Activated CD8-positive, alpha-beta T cell treated with anti-CD3 and anti-CD28 coated beads for 36 hours (primary cell): ENCODE measurements at regions of chr1 and their contacts with region 1.

Region 1: GRCh38 chr1:108125312-108126138 is 74.6 kb downstream of the SLC25A24 start:
- DNase-seq: peak; percentile 74
- ATAC-seq: peak; percentile 99
- H3K4me3 Mint-ChIP-seq: no peak overlapping the region
- H3K27ac Mint-ChIP-seq: no peak overlapping the region
- H3K4me1 Mint-ChIP-seq: peaks cover 3% of the 10 kb centered on the region
- H3K27me3 Mint-ChIP-seq: no peaks in the 10 kb centered on the region
- CTCF ChIP-seq: peak; percentile 89

Region 2: GRCh38 chr1:107789817-107790524 is 335.6 kb before region 1 on chr1:
- CTCF ChIA-PET with region 1: interaction called, 350 read pairs
- POLR2A ChIA-PET with region 1: no interaction called
- intact Hi-C with region 1: no loop called
- DNase-seq: no peak
- ATAC-seq: no peak
- H3K4me3 Mint-ChIP-seq: no peak overlapping the region
- H3K27ac Mint-ChIP-seq: no peak overlapping the region
- H3K4me1 Mint-ChIP-seq: peaks cover 74% of the 10 kb centered on the region
- H3K27me3 Mint-ChIP-seq: no peaks in the 10 kb centered on the region
- CTCF ChIP-seq: no peak

Region 3: GRCh38 chr1:107795994-107796393 is 329.5 kb before region 1 on chr1:
- CTCF ChIA-PET with region 1: interaction called, 16 read pairs
- POLR2A ChIA-PET with region 1: no interaction called
- intact Hi-C with region 1: no loop called
- DNase-seq: peak; percentile 51
- ATAC-seq: peak; percentile 73
- H3K4me3 Mint-ChIP-seq: no peak overlapping the region
- H3K27ac Mint-ChIP-seq: peak overlapping the region; percentile 67
- H3K4me1 Mint-ChIP-seq: peaks cover 44% of the 10 kb centered on the region
- H3K27me3 Mint-ChIP-seq: no peaks in the 10 kb centered on the region
- CTCF ChIP-seq: no peak

Region 4: GRCh38 chr1:107936498-107937481 is 188.7 kb before region 1 on chr1:
- CTCF ChIA-PET with region 1: no interaction called
- POLR2A ChIA-PET with region 1: no interaction called
- intact Hi-C with region 1: no loop called
- DNase-seq: peak; percentile 82
- ATAC-seq: peak; percentile 48
- H3K4me3 Mint-ChIP-seq: peak overlapping the region; percentile 44
- H3K27ac Mint-ChIP-seq: peak overlapping the region; percentile 70
- H3K4me1 Mint-ChIP-seq: peaks cover 86% of the 10 kb centered on the region
- H3K27me3 Mint-ChIP-seq: no peaks in the 10 kb centered on the region
- CTCF ChIP-seq: no peak

Region 5: GRCh38 chr1:107963601-107964335 is 161.8 kb before region 1 on chr1:
- CTCF ChIA-PET with region 1: interaction called, 31 read pairs
- POLR2A ChIA-PET with region 1: no interaction called
- intact Hi-C with region 1: loop called (anchors 5 kb)
- DNase-seq: peak; percentile 70
- ATAC-seq: peak; percentile 74
- H3K4me3 Mint-ChIP-seq: peak overlapping the region; percentile 93
- H3K27ac Mint-ChIP-seq: peak overlapping the region; percentile 98
- H3K4me1 Mint-ChIP-seq: peaks cover 32% of the 10 kb centered on the region
- H3K27me3 Mint-ChIP-seq: no peaks in the 10 kb centered on the region
- CTCF ChIP-seq: no peak

Region 6: GRCh38 chr1:108107658-108108518 is 17.6 kb before region 1 on chr1:
- CTCF ChIA-PET with region 1: interaction called, 17 read pairs
- POLR2A ChIA-PET with region 1: no interaction called
- intact Hi-C with region 1: no loop called
- DNase-seq: peak; percentile 58
- ATAC-seq: peak; percentile 95
- H3K4me3 Mint-ChIP-seq: no peak overlapping the region
- H3K27ac Mint-ChIP-seq: peak overlapping the region; percentile 64
- H3K4me1 Mint-ChIP-seq: peaks cover 14% of the 10 kb centered on the region
- H3K27me3 Mint-ChIP-seq: no peaks in the 10 kb centered on the region
- CTCF ChIP-seq: no peak